ENCODE measurements at regions of chr19 and their contacts with region 1.

Region 1: GRCh38 chr19:42108527-42109389 is 23.5 kb downstream of the POU2F2 start:
- DNase-seq: no peak
- H3K4me3 ChIP-seq: no peak overlapping the region
- H3K27me3 ChIP-seq: no peaks in the 10 kb centered on the region
- CTCF ChIP-seq: peak; percentile 100

Region 2: DNA sequence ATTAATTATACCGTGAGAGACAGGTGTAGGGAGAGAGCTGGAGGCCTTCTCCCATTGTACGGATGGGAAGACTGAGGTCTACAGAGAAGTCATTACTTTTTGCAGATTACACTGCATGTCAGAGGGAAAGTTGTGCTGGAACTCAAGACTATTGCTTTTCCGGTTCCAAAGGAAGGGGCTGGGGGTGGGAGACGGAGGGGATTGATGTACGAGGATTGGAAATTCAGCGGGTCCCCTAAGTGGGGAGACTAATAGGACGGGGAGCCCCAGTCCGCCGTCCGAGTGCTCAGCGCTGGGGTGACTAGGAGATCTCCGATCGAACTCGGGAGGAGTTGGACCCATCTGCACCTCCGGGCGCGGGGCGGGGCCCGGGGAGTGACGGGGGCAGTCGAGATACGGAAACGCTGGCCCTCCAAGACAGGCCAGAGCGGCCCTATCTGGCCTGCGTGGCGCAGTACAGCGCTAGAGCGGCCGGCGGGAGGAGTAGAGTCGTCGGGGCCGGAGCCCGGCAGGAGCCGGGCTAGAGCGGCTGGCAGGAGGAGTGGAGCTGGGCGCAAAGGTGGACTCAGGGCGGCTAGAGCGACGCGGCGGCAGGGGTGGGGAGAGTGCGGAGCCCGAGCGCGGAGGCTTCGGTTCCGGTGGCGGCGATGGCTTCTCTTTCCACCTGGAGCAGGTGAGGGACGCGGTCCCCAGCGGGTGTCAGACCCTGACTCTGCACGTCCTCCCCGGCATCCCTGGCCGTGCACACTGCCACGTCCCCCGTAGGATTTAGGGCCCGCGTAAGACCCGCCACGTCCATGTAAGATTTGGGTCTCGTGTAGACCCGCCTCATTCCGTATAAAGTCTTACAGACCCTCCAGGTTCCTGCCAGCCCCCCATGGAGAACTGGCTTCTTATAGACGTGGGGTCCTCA is 224.7 kb before region 1 on chr19:
- CTCF ChIA-PET with region 1: no interaction called
- POLR2A ChIA-PET with region 1: no interaction called
- DNase-seq: peak; percentile 73
- H3K4me3 ChIP-seq: peak overlapping the region; percentile 99
- H3K27me3 ChIP-seq: no peaks in the 10 kb centered on the region
- CTCF ChIP-seq: peak; percentile 32; the same call in 1 of the 2 replicates

Region 3: DNA sequence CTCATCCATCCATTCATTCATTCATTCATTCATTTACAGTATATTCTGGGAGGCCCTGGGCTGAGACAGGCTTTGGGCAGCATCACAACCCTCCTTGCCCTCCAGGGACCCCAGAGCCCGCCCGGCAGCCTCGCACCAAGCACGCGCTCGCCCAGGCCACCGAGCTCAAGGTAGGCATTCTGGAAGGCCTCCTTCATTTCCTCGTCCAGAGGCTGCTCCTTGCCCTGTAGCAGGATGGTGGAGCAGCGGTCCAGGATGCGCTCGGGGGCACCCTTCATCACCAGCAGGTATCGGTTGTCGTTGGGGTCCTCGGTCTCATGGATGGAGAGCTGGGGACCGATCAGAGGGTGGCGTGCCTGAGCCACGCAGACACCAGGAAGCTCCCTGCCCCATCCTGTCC is 130.3 kb before region 1 on chr19:
- CTCF ChIA-PET with region 1: no interaction called
- POLR2A ChIA-PET with region 1: no interaction called
- DNase-seq: no peak
- H3K4me3 ChIP-seq: no peak overlapping the region
- H3K27me3 ChIP-seq: no peaks in the 10 kb centered on the region
- CTCF ChIP-seq: no peak

Region 4: GRCh38 chr19:42121656-42122069 is 12.9 kb after region 1 on chr19:
- CTCF ChIA-PET with region 1: interaction called, 34 read pairs
- POLR2A ChIA-PET with region 1: no interaction called
- DNase-seq: peak; percentile 43
- H3K4me3 ChIP-seq: no peak overlapping the region
- H3K27me3 ChIP-seq: no peaks in the 10 kb centered on the region
- CTCF ChIP-seq: no peak

Region 5: GRCh38 chr19:42140125-42140754 is 31.5 kb after region 1 on chr19:
- CTCF ChIA-PET with region 1: interaction called, 89 read pairs
- POLR2A ChIA-PET with region 1: no interaction called
- DNase-seq: no peak
- H3K4me3 ChIP-seq: no peak overlapping the region
- H3K27me3 ChIP-seq: peaks cover 2% of the 10 kb centered on the region
- CTCF ChIP-seq: no peak

Region 6: GRCh38 chr19:42184401-42184861 is 75.7 kb after region 1 on chr19:
- CTCF ChIA-PET with region 1: interaction called, 98 read pairs
- POLR2A ChIA-PET with region 1: no interaction called
- DNase-seq: peak; percentile 40
- H3K4me3 ChIP-seq: no peak overlapping the region
- H3K27me3 ChIP-seq: peaks cover 18% of the 10 kb centered on the region
- CTCF ChIP-seq: peak; percentile 95

Region 7: DNA sequence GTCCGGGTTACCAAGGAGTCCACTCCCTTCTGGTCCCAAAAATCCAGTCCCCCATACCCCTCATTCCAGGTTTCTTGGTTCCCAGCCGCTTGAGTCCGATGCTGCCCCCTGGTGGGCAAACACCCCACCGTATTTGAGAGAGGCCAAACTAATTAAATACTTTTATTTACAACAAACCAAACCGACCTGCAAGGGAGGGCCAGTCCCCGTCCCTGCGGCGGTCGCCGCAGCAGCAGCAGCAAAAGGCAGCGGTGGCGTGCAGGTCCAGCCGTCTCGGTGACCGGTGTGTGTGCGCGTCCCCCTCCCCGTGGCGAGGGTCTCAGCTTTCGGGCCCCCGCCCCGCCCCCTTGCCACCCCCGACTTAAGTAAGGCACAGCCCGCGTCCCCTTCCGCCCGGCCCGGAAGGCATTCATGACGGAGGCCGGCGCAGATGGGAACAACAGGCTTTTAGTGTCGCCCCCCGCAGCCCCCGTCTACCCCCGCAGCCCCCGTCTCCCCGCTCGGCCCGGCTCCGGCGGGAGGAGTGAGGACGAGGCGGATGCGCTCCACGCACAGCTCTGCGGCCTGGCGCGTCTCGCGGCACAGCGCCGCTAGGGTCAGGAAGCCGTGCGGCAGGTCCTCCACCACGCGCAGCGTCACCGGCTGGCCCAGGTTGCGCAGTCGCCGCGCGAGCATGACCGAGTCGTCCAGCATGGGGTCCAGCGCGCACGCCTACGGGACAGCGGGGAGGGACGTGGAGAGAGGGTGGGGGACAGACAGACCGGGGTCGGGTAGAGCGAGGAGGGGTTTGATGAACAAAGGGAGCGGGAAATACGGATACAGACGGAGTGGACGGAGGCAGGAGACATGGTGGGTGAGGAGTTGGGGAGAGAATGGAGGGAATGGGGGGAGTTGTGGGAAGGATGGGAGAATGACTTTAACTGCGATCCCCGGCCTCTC is 292.9 kb after region 1 on chr19:
- CTCF ChIA-PET with region 1: interaction called, 13 read pairs
- POLR2A ChIA-PET with region 1: no interaction called
- DNase-seq: no peak
- H3K4me3 ChIP-seq: peak overlapping the region; percentile 45
- H3K27me3 ChIP-seq: no peaks in the 10 kb centered on the region
- CTCF ChIP-seq: peak; percentile 89

Measured in BJ (cell line).